Transverse colon (tissue), 4 donors: ENCODE measurements at regions of chr15 and their contacts with region 1.

Region 1: DNA sequence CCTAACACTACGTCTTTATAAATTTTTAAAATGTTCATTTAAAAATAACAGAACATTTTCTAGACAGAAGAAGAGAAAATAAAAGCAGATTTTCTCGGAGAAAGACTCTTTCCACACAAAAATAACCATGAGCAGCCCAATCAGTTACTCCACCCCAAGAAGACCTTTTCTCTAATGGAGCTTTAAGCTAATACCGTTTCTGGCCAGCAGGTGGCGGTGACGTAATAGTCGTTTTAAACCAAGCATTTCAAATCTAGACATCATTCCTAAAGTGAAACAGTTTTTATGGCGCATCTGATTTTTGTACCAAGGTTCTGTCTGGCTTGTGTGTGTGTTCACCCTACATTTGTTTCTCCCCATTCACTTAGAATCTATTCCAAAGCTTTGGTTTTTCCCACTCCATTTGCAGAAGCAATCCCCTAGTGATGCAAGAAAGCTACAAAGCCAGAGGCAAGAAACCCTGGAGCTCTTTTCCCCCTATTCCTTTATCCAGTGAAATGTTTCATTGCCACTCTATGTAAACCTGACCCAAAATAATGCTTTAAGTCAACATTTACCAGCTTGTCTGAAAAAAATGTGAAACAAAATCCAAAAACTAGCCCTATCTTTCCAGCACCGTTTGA is 336.7 kb upstream of the IGF1R start:
- DNase-seq: peak; percentile 79
- H3K4me3 ChIP-seq: no peak overlapping the region
- H3K27ac ChIP-seq: no peak overlapping the region
- H3K4me1 ChIP-seq: peaks cover 0 to 4% (median 0%) of the 10 kb centered on the region in 4 donors
- H3K27me3 ChIP-seq: peaks cover 4% of the 10 kb centered on the region
- CTCF ChIP-seq: peak; percentile 81 to 86 (median 82)
- EP300 ChIP-seq: no peak
- POLR2A ChIP-seq: no peak

Region 2: DNA sequence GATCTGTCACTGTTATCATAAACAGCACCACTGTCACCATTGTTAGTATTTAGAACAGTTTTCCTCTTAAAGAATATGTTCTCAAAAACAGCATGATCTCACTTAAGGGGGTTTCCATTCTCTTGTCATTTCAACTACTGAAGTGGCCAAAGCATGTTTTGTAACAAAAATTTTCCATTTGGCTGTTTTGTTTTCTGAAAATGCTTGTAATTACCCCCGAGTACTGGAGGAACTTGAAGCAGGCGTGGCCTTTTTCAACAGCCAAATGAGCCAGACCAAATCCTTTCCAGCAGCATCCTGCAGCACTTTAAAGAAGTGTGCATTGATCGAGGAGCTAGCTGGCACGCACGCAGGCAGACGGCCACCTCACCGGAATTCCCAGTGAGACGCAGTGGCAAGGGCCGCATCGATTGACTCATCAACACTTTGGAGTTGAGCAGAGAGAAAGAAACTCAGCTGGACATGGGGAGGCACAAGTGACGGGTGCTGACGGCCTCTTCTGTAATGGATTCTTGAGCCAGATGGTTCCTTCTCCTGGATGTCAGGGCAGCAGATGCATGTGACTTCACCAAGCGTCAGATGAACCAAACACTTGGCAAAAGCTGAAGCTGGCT is 102.4 kb after region 1 on chr15:
- in situ Hi-C with region 1: loop called in 2 of 4 experiments (anchors 10 kb)
- intact Hi-C with region 1: no loop called
- DNase-seq: no peak
- H3K4me3 ChIP-seq: no peak overlapping the region
- H3K27ac ChIP-seq: no peak overlapping the region
- H3K4me1 ChIP-seq: peaks cover 0 to 7% (median 2%) of the 10 kb centered on the region in 4 donors
- H3K27me3 ChIP-seq: no peaks in the 10 kb centered on the region
- CTCF ChIP-seq: no peak
- EP300 ChIP-seq: no peak
- POLR2A ChIP-seq: no peak

Region 3: GRCh38 chr15:98421419-98422129 is 109.9 kb after region 1 on chr15:
- in situ Hi-C with region 1: loop called (anchors 5 to 10 kb)
- intact Hi-C with region 1: loop called (anchors 2 kb)
- DNase-seq: peak; percentile 58
- H3K4me3 ChIP-seq: peak overlapping the region in 1 of 4 donors; percentile 15
- H3K27ac ChIP-seq: no peak overlapping the region
- H3K4me1 ChIP-seq: peaks cover 6 to 12% (median 10%) of the 10 kb centered on the region in 4 donors
- H3K27me3 ChIP-seq: peaks cover 25% of the 10 kb centered on the region
- CTCF ChIP-seq: peak; percentile 90 to 100 (median 99)
- EP300 ChIP-seq: no peak
- POLR2A ChIP-seq: no peak

Region 4: DNA sequence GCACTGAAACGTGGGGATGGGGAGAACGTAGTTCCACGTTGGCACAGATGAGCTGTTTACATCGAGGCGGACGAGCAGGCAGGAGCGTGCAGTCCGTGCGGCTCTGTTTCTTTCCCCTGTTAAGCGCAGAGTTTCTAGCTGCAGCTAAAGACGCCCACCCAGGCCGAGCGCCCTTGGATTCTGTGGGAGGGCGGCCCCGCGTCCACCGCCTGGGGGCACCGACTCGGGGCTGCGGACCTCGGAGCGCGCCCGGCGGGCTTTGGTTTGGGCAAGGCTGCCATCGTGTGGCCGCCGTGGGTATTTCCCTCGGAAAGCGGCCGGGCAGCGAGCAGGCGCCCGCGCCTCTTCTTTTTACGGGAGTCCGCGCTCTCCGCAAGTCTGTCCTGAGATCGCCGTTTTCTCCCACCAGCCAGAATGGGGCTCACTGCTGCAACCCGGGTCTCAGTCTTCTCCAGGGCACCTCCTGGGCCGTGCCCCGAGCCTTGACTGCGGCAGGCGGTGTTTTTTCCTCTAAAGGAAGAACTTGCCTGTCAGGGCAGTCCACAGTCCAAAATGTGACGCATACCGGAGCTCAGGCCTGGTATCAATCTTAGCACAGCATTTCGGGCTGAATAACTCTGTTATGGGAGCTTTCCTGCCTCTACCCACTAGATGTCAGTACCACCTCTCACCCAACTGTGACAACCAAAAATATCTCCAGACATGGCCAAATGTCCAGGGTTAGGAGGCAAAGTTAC is 116.7 kb after region 1 on chr15:
- in situ Hi-C with region 1: loop called in 2 of 4 experiments (anchors 5 kb)
- intact Hi-C with region 1: no loop called
- DNase-seq: peak; percentile 68
- H3K4me3 ChIP-seq: peak overlapping the region; percentile 16 to 48 (median 20)
- H3K27ac ChIP-seq: peak overlapping the region in 3 of 4 donors; percentile 57 to 74 (median 64)
- H3K4me1 ChIP-seq: peaks cover 0 to 7% (median 2%) of the 10 kb centered on the region in 4 donors
- H3K27me3 ChIP-seq: peaks cover 11% of the 10 kb centered on the region
- CTCF ChIP-seq: peak; percentile 78 to 88 (median 84)
- EP300 ChIP-seq: no peak
- POLR2A ChIP-seq: no peak